ENCODE measurements at regions of chr3 and their contacts with region 1.

Region 1: GRCh38 chr3:59857589-59858346 is 807.9 kb upstream of the CFAP20DC start:
- DNase-seq: peak; percentile 68
- CTCF ChIP-seq: peak; percentile 86

Region 2: GRCh38 chr3:59212128-59212779 is 645.5 kb before region 1 on chr3:
- in situ Hi-C with region 1: loop called (anchors 25 kb)
- DNase-seq: peak; percentile 54
- CTCF ChIP-seq: peak; percentile 72

Region 3: GRCh38 chr3:59575113-59576001 is 282.4 kb before region 1 on chr3:
- in situ Hi-C with region 1: loop called (anchors 25 kb)
- DNase-seq: peak; percentile 61
- CTCF ChIP-seq: peak; percentile 92